ENCODE measurements at regions of chr6 and their contacts with region 1.

Region 1: GRCh38 chr6:151390276-151391032 is 905 bp downstream of the ZBTB2 start:
- DNase-seq: peak; percentile 97 to 99 (median 98)
- ATAC-seq: peak; percentile 89 to 94 (median 91)
- H3K4me3 ChIP-seq: peak overlapping the region; percentile 71 to 100 (median 94)
- H3K27ac ChIP-seq: peak overlapping the region; percentile 96 to 100 (median 99)
- H3K4me1 ChIP-seq: peaks cover 12 to 57% (median 42%) of the 10 kb centered on the region in 12 donors
- H3K27me3 ChIP-seq: no peaks in the 10 kb centered on the region
- CTCF ChIP-seq: peak in 1 of 12 donors; percentile 20
- POLR2A ChIP-seq: peak in 1 of 2 donors; percentile 13

Region 2: DNA sequence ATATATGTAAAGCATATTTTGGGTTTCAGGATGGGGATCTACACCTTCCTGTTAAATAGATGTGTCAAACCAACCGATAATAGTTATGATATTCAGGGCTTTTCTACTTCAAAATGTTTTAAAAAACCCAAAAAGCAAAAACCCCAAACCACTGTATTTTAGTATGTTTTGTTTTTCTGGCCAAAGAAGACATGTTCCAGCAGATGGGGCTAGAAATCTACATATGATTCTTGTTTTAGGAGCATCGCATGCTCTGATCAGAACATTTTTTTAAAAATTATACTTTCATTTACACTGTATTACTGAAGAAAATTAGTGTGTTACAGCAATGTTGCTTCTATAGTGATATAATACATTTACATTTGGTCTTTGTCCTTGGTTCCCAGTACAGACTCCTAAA is 50.5 kb after region 1 on chr6:
- intact Hi-C with region 1: loop called in 5 of 10 experiments (anchors 5 to 10 kb)
- DNase-seq: no peak
- ATAC-seq: no peak
- H3K4me3 ChIP-seq: peak overlapping the region in 1 of 12 donors; percentile 20
- H3K27ac ChIP-seq: peak overlapping the region in 6 of 12 donors; percentile 1 to 40 (median 10)
- H3K4me1 ChIP-seq: peaks cover 0 to 52% (median 37%) of the 10 kb centered on the region in 12 donors
- H3K27me3 ChIP-seq: no peaks in the 10 kb centered on the region
- CTCF ChIP-seq: peak in 11 of 12 donors; percentile 11 to 61 (median 44)
- POLR2A ChIP-seq: no peak

Region 3: GRCh38 chr6:151446121-151446693 is 55.8 kb after region 1 on chr6:
- intact Hi-C with region 1: loop called in 7 of 10 experiments (anchors 5 to 10 kb)
- DNase-seq: peak in 1 of 5 donors; percentile 51
- ATAC-seq: peak in 3 of 4 donors; percentile 40 to 78 (median 49)
- H3K4me3 ChIP-seq: no peak overlapping the region
- H3K27ac ChIP-seq: peak overlapping the region in 10 of 12 donors; percentile 1 to 77 (median 53)
- H3K4me1 ChIP-seq: peaks cover 0 to 33% (median 17%) of the 10 kb centered on the region in 12 donors
- H3K27me3 ChIP-seq: no peaks in the 10 kb centered on the region
- CTCF ChIP-seq: no peak
- POLR2A ChIP-seq: no peak

Region 4: GRCh38 chr6:151451950-151452749 is 61.7 kb after region 1 on chr6 and contains the start of gene RMND1:
- intact Hi-C with region 1: loop called in 8 of 10 experiments (anchors 1 to 10 kb)
- DNase-seq: peak; percentile 100
- ATAC-seq: peak; percentile 99
- H3K4me3 ChIP-seq: peak within 1 kb of the TSS; percentile 67 to 94 (median 86)
- H3K27ac ChIP-seq: peak within 1 kb of the TSS; percentile 85 to 98 (median 94)
- H3K4me1 ChIP-seq: peaks cover 0 to 28% (median 22%) of the 10 kb centered on the region in 12 donors
- H3K27me3 ChIP-seq: no peaks in the 10 kb centered on the region
- CTCF ChIP-seq: no peak
- POLR2A ChIP-seq: peak in 1 of 2 donors; percentile 65
- total RNA-seq, gene RMND1: 10.2 to 17.4 (median 16.7) TPM

Region 5: DNA sequence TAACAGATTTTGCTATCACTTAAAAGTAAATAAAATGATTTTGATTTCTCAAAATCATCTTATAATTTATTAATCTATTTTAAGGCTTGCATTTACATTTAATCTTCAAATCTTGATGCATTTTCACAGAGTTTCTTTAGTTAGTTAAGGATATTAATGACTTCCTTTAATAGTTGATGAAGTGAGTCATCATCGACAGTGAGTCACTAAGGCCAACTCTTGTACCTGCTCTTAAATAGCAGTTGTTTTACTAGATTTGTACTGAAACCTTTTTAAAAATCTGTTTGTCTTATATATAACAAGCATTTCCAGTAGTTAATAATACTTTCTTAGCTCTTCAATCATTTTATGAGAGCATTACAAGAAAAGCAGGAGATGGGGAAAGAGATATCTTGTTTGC is 608.7 kb after region 1 on chr6:
- intact Hi-C with region 1: no loop called
- DNase-seq: no peak
- ATAC-seq: no peak
- H3K4me3 ChIP-seq: no peak overlapping the region
- H3K27ac ChIP-seq: no peak overlapping the region
- H3K4me1 ChIP-seq: no peaks in the 10 kb centered on the region
- H3K27me3 ChIP-seq: no peaks in the 10 kb centered on the region
- CTCF ChIP-seq: no peak
- POLR2A ChIP-seq: no peak

Region 6: DNA sequence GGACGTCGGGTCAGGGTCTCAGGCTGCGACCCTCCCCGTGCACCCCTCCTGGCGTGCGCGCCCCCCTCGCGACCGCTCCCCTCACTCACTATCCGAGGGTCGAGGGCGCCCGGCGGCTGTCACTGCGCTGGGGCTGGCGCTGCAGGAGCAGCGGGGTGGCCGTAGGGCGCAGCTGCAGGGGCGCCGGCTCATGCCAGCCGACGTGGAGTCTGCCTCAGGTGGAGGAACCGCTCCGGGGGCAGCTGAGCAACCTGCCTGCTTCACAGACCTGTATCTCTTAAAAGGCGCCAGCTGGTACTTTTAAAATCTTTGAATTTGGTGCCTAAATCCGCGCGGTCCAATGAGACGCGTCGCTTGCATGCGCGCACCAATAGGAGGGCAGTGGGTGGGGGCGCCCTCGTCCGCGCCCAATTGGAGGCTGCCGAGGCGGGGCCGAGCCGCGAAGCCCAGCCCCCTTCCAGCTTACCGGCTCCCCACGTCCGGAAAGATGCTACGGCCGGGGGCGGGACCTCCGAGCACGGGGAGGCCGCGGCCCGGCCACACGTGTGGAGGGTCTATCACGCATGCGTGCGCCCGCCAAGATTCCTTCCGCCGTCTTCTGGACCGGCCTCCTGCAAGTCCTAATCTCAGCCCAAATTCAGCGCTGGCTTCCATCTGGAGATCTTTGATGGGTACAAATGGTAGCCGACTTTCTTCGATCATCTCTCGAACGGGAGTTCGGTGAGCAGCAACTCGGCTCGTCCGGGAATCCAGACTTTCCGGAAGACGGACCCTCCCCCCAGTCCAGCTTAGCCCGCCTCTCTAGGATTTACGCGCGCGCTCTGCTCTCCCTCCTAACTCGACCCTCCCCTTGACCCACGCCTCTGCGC is 1592.5 kb after region 1 on chr6 and contains the start of gene FBXO5:
- intact Hi-C with region 1: loop called in 1 of 10 experiments (anchors 5 kb)
- DNase-seq: peak; percentile 97 to 99 (median 98)
- ATAC-seq: peak; percentile 97 to 98 (median 98)
- H3K4me3 ChIP-seq: peak within 1 kb of the TSS; percentile 51 to 92 (median 70)
- H3K27ac ChIP-seq: peak within 1 kb of the TSS; percentile 66 to 99 (median 94)
- H3K4me1 ChIP-seq: peaks cover 4 to 46% (median 21%) of the 10 kb centered on the region in 12 donors
- H3K27me3 ChIP-seq: no peaks in the 10 kb centered on the region
- CTCF ChIP-seq: no peak
- POLR2A ChIP-seq: peak in 1 of 2 donors; percentile 57
- total RNA-seq, gene FBXO5: 1.1 to 5.1 (median 2.1) TPM

Measured in heart left ventricle (tissue), 16 donors.